ENCODE measurements at regions of chr15 and their contacts with region 1.

Region 1: GRCh38 chr15:40906091-40906990 is 12.1 kb downstream of the VPS18 start:
- DNase-seq: peak; percentile 76
- H3K4me3 Mint-ChIP-seq: peak overlapping the region; percentile 71
- H3K27ac Mint-ChIP-seq: no peak overlapping the region
- H3K4me1 Mint-ChIP-seq: peaks cover 33% of the 10 kb centered on the region
- H3K27me3 Mint-ChIP-seq: no peaks in the 10 kb centered on the region

Region 2: GRCh38 chr15:40928821-40929659 is 22.7 kb after region 1 on chr15 and contains the start of gene DLL4:
- CTCF ChIA-PET with region 1: interaction called, 25 read pairs
- POLR2A ChIA-PET with region 1: no interaction called
- DNase-seq: peak; percentile 42
- H3K4me3 Mint-ChIP-seq: peak within 1 kb of the TSS; percentile 50
- H3K27ac Mint-ChIP-seq: no peak within 1 kb of the TSS
- H3K4me1 Mint-ChIP-seq: peaks cover 47% of the 10 kb centered on the region
- H3K27me3 Mint-ChIP-seq: peaks cover 75% of the 10 kb centered on the region
- total RNA-seq, gene DLL4: not detected

Region 3: GRCh38 chr15:40941528-40942336 is 35.4 kb after region 1 on chr15:
- CTCF ChIA-PET with region 1: interaction called, 15 read pairs
- POLR2A ChIA-PET with region 1: interaction called, 10 read pairs
- DNase-seq: peak; percentile 73
- H3K4me3 Mint-ChIP-seq: peak overlapping the region; percentile 80
- H3K27ac Mint-ChIP-seq: no peak overlapping the region
- H3K4me1 Mint-ChIP-seq: peaks cover 44% of the 10 kb centered on the region
- H3K27me3 Mint-ChIP-seq: peaks cover 4% of the 10 kb centered on the region

Region 4: GRCh38 chr15:41018502-41018901 is 112.2 kb after region 1 on chr15:
- CTCF ChIA-PET with region 1: interaction called, 16 read pairs
- POLR2A ChIA-PET with region 1: no interaction called
- DNase-seq: no peak
- H3K4me3 Mint-ChIP-seq: no peak overlapping the region
- H3K27ac Mint-ChIP-seq: no peak overlapping the region
- H3K4me1 Mint-ChIP-seq: peaks cover 14% of the 10 kb centered on the region
- H3K27me3 Mint-ChIP-seq: no peaks in the 10 kb centered on the region

Region 5: GRCh38 chr15:41024131-41024530 is 117.8 kb after region 1 on chr15:
- CTCF ChIA-PET with region 1: interaction called, 16 read pairs
- POLR2A ChIA-PET with region 1: no interaction called
- DNase-seq: no peak
- H3K4me3 Mint-ChIP-seq: no peak overlapping the region
- H3K27ac Mint-ChIP-seq: no peak overlapping the region
- H3K4me1 Mint-ChIP-seq: no peaks in the 10 kb centered on the region
- H3K27me3 Mint-ChIP-seq: no peaks in the 10 kb centered on the region

Region 6: DNA sequence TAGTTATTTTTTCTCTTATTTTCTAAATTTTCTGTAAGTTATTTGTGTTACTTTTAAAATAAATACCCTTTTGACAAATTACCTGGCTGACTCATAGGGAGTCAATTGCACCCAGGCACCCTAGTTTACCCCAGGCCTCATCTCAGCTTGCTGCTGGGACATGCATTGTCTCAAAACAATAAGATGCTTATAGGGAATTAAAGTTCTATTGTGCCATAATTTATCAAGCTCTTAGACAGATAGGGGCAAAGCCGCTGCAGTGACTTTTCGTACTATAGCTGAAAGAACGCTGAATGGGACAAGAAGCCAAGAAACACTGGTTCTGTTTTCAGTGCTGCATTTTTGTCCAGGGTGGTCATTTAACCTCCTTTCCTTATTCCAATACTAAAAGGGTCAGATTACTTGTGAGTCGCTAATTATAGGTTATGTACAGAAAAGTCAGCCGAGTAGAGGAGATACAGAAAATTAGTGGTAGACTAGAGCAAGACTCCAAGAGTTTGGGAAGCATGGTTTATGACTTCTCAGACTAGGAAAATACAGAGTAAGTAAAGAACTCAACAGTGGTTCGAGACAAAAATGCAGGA is 274.0 kb after region 1 on chr15:
- CTCF ChIA-PET with region 1: interaction called, 65 read pairs
- POLR2A ChIA-PET with region 1: no interaction called
- DNase-seq: no peak
- H3K4me3 Mint-ChIP-seq: no peak overlapping the region
- H3K27ac Mint-ChIP-seq: no peak overlapping the region
- H3K4me1 Mint-ChIP-seq: no peaks in the 10 kb centered on the region
- H3K27me3 Mint-ChIP-seq: no peaks in the 10 kb centered on the region